Activated naive CD8-positive, alpha-beta T cell treated with anti-CD3 and anti-CD28 coated beads, Interleukin-2, amount 10 ng/mL, durations not matched to agents 7 days and 5 days (primary cell): ENCODE measurements at regions of chr6 and their contacts with region 1.

Region 1: DNA sequence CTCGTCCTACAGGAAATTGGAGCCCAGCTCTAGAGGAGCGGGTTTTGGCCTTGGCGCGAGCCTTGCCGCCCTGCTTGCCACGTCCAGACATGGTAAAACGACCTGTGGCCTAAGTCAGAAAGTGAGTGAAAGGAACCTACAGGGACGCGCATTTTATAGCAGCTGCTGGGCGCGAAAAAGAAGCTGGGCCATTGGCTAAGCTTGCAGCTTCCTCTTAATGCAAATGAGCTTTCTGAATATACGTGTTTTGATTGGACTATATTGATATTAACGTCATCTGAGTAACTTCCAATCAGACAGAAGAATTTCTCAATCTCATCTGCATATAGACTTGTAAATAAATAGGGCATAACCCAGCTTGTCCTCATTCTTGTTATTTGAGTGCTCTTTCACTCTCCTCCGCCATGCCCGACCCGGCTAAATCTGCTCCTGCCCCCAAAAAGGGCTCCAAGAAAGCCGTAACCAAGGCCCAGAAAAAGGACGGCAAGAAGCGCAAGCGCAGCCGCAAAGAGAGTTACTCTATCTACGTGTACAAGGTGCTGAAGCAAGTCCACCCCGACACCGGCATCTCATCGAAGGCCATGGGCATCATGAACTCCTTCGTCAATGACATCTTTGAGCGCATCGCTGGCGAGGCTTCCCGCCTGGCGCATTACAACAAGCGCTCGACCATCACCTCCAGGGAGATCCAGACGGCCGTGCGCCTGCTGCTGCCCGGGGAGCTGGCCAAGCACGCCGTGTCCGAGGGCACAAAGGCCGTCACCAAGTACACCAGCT is 18.9 kb downstream of the OR2B2 start:
- DNase-seq: peak; percentile 82
- ATAC-seq: peak; percentile 55
- H3K4me3 Mint-ChIP-seq: no peak overlapping the region
- H3K27ac Mint-ChIP-seq: no peak overlapping the region
- H3K4me1 Mint-ChIP-seq: peaks cover 43% of the 10 kb centered on the region
- H3K27me3 Mint-ChIP-seq: no peaks in the 10 kb centered on the region

Region 2: GRCh38 chr6:26045065-26045927 is 1848.0 kb before region 1 on chr6:
- POLR2A ChIA-PET with region 1: interaction called, 12 read pairs
- DNase-seq: peak; percentile 82
- ATAC-seq: peak; percentile 56
- H3K4me3 Mint-ChIP-seq: peak overlapping the region; percentile 86
- H3K27ac Mint-ChIP-seq: peak overlapping the region; percentile 99
- H3K4me1 Mint-ChIP-seq: peaks cover 41% of the 10 kb centered on the region
- H3K27me3 Mint-ChIP-seq: no peaks in the 10 kb centered on the region

Region 3: DNA sequence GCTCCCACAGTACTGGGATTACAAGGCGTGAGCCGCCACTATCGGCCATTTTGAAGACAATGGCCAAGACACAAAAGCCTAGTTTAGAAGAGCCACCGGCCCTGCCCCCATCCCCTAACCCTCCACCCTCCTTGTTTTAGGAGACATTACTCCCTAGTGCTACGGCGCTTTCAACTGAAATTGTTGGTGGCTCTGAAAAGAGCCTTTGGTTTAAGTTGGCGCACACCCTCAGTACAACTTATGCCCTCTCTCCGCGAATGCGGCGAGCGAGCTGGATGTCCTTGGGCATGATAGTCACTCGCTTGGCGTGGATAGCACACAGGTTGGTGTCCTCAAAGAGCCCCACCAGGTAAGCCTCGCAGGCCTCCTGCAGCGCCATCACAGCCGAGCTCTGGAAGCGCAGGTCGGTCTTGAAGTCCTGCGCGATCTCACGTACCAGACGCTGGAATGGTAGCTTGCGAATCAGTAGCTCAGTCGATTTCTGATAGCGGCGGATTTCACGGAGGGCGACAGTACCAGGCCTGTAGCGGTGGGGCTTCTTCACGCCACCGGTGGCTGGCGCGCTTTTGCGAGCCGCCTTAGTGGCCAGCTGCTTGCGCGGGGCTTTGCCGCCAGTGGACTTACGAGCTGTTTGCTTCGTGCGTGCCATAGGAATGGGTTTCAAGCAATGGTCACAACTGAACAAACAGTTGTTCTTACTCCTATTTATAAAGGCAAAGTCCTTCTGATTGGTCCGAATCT is 1643.1 kb before region 1 on chr6:
- POLR2A ChIA-PET with region 1: interaction called, 15 read pairs
- DNase-seq: peak; percentile 79
- ATAC-seq: peak; percentile 53
- H3K4me3 Mint-ChIP-seq: peak overlapping the region; percentile 90
- H3K27ac Mint-ChIP-seq: peak overlapping the region; percentile 99
- H3K4me1 Mint-ChIP-seq: peaks cover 16% of the 10 kb centered on the region
- H3K27me3 Mint-ChIP-seq: no peaks in the 10 kb centered on the region

Region 4: DNA sequence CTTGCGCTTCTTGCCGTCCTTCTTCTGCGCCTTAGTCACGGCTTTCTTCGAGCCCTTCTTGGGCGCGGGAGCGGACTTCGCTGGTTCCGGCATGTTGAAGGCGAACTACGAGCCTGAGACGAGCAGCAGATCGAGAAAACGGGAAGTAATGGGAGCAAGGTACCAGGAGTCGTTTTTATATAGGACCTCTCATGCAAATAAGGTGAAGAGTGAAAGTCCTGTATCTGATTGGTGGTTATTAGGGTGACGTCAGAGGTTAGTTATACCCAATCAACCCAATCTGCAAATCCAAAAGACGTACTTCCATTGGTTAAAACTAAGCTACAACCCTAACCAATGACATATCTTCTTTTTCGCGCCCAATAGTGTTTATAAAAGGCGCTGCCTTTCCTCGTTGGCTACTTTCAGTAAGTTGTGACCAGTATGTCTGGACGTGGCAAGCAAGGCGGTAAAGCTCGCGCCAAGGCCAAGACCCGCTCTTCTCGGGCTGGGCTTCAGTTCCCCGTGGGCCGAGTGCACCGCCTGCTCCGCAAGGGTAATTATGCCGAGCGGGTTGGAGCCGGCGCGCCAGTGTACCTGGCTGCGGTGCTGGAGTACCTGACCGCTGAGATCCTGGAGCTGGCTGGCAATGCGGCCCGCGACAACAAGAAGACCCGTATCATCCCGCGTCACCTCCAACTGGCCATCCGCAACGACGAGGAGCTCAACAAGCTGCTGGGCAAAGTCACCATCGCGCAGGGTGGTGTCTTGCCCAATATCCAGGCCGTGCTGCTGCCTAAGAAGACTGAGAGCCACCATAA is 746.3 kb before region 1 on chr6:
- POLR2A ChIA-PET with region 1: interaction called, 140 read pairs
- DNase-seq: peak; percentile 83
- ATAC-seq: peak; percentile 71
- H3K4me3 Mint-ChIP-seq: no peak overlapping the region
- H3K27ac Mint-ChIP-seq: no peak overlapping the region
- H3K4me1 Mint-ChIP-seq: peaks cover 18% of the 10 kb centered on the region
- H3K27me3 Mint-ChIP-seq: no peaks in the 10 kb centered on the region

Region 5: DNA sequence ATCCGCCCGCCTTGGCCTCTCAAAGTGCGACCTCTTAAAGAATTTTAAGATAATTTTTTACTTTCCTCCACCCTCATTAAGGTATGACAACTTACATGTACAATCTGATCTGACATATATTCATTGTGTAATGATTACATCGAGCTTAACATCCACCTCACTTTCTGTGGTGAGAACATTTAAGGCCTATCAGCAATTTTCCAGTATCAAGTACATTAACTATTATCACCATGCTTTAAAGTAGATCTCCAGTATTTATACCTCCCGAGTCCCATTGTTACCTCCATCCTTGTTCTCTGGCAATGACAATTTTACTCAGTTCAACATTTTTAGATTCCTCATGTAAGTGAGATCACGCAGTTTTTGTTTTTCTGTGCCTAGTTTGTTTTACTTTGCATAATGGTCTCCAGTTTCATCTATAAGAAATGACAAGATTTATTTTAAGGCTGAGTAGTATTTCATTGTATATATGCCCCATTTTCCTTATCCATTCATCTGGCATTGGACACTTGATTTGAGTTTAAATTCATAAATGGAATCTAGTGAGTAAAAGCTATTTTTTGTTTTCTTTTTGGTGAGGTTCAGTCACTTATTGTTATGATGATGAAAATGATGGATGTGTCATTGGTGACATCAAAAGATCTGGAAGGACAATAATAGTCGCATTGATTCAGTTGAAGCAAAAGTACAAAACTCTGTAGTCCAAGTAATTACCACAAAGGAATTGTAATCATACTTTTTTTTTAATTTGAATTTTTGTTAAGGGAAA is 68.0 kb before region 1 on chr6:
- POLR2A ChIA-PET with region 1: interaction called, 675 read pairs
- DNase-seq: no peak
- ATAC-seq: peak; percentile 2
- H3K4me3 Mint-ChIP-seq: peak overlapping the region; percentile 90
- H3K27ac Mint-ChIP-seq: peak overlapping the region; percentile 99
- H3K4me1 Mint-ChIP-seq: peaks cover 39% of the 10 kb centered on the region
- H3K27me3 Mint-ChIP-seq: no peaks in the 10 kb centered on the region

Region 6: DNA sequence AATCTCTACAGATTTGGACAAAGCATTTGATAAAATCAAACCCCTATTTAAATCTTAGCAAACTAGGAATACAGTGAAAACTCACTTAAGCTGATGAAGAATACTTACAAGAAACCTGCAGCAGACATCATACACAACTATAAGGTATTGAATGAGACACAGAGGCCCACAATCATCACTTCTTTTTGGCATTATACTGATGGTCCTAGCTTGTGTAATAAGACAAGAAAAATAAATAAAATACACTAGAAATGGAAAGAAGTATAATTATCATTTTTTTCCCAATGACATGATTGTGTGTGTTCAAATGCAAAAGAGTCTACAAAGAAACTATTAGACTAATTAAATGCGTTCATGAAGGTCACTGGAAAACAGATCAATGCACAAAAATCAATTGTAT is 55.0 kb after region 1 on chr6:
- POLR2A ChIA-PET with region 1: no interaction called
- DNase-seq: no peak
- ATAC-seq: no peak
- H3K4me3 Mint-ChIP-seq: no peak overlapping the region
- H3K27ac Mint-ChIP-seq: no peak overlapping the region
- H3K4me1 Mint-ChIP-seq: no peaks in the 10 kb centered on the region
- H3K27me3 Mint-ChIP-seq: peaks cover 14% of the 10 kb centered on the region

Region 7: GRCh38 chr6:27966044-27966443 is 72.8 kb after region 1 on chr6:
- POLR2A ChIA-PET with region 1: no interaction called
- DNase-seq: no peak
- ATAC-seq: no peak
- H3K4me3 Mint-ChIP-seq: no peak overlapping the region
- H3K27ac Mint-ChIP-seq: no peak overlapping the region
- H3K4me1 Mint-ChIP-seq: no peaks in the 10 kb centered on the region
- H3K27me3 Mint-ChIP-seq: peaks cover 25% of the 10 kb centered on the region

Region 8: DNA sequence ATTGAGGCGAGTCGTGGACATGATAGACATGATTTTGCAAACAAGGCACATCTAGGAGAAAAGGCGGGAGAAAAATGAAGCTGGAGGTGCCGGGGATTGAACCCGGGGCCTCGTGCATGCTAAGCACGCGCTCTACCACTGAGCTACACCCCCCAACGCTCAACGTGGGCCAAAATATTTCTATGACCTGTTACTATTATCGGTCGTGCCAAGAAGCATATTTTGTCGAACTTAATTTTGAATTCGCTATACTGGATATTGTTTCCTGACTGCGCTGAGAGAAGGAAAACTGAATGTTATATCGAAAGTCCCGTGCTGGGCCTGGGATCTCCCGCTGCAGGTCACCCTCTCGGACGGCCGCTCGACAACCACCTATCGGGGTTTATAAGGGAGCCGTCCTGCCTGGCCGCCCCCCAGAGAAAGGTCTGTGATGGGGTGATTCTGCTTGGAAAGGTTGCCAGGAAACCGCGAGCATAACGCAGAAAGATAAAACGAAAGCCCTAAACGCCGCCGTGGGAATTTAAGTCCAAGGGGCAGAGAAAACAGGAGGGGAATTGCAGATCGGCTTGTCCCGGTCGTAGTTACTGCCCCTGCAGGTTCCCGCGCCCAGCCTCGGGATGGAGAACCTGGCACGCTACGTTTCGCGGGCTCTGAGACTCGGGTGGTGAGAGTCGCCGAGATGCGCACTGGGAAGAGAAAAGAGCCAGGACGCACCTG is 970.5 kb after region 1 on chr6:
- POLR2A ChIA-PET with region 1: interaction called, 20 read pairs
- DNase-seq: peak; percentile 77
- ATAC-seq: peak; percentile 34
- H3K4me3 Mint-ChIP-seq: peak overlapping the region; percentile 92
- H3K27ac Mint-ChIP-seq: peak overlapping the region; percentile 88
- H3K4me1 Mint-ChIP-seq: peaks cover 39% of the 10 kb centered on the region
- H3K27me3 Mint-ChIP-seq: peaks cover 3% of the 10 kb centered on the region